HepG2 (cell line): ENCODE measurements at regions of chr2 and their contacts with region 1.

Region 1: DNA sequence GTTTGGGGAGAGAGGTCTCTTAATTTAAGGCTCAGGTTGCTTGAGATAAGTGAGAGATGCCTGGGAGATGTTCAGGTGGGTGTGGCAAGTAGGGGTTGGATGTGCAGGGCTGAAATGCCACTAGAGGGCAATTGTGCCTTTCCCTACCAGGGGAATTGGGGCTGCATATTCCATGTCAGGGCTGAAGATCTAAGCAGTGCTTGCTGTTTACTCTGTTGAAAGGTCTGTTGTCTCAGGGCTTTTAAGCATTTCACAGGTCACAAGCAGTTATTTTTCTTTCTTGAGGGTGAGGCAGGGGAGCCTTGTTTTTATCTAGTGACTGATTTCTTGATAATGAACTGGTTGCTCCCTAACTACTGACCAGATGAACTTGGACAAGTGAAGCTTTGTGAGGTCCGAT is 7.9 kb downstream of the CCDC85A start:
- DNase-seq: peak; percentile 39
- ATAC-seq: peak; percentile 99
- H3K4me3 ChIP-seq: no peak overlapping the region
- H3K27ac ChIP-seq: no peak overlapping the region
- H3K4me1 ChIP-seq: no peaks in the 10 kb centered on the region
- H3K27me3 ChIP-seq: peaks cover 0 to 14% of the 10 kb centered on the region in 2 experiments; a peak in 2 of 5 replicates
- CTCF ChIP-seq: peak; percentile 78
- EP300 ChIP-seq: no peak
- POLR2A ChIP-seq: no peak
- RAD21 ChIP-seq: peak; percentile 70

Region 2: DNA sequence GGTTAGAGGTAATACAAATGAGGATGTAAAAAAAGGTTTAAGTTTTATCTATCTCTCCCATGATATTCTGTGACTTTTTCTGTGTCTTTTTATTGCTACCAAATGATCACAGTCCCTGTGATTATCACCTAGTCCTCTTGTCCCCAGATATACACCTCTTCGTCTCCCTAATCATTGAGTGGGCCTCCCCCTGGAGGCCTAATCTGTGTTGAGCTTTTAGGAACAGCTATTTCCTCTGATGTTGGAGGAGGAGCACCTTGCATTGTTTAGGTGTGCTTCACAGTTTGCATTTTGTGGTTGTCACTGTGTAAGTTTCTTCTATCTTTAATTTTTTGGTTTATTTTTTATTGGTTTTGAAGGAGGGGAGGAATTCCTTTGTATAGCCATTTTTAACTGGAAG is 25.4 kb after region 1 on chr2:
- CTCF ChIA-PET with region 1: no interaction called
- POLR2A ChIA-PET with region 1: no interaction called
- in situ Hi-C with region 1: no loop called
- intact Hi-C with region 1: loop called (anchors 1 kb)
- DNase-seq: no peak
- ATAC-seq: no peak; the same call in 2 of the 3 replicates
- H3K4me3 ChIP-seq: no peak overlapping the region
- H3K27ac ChIP-seq: no peak overlapping the region
- H3K4me1 ChIP-seq: no peaks in the 10 kb centered on the region
- H3K27me3 ChIP-seq: no peaks in the 10 kb centered on the region
- CTCF ChIP-seq: peak; percentile 28; the same call in 1 of the 2 replicates
- EP300 ChIP-seq: no peak
- POLR2A ChIP-seq: no peak
- RAD21 ChIP-seq: no peak

Region 3: DNA sequence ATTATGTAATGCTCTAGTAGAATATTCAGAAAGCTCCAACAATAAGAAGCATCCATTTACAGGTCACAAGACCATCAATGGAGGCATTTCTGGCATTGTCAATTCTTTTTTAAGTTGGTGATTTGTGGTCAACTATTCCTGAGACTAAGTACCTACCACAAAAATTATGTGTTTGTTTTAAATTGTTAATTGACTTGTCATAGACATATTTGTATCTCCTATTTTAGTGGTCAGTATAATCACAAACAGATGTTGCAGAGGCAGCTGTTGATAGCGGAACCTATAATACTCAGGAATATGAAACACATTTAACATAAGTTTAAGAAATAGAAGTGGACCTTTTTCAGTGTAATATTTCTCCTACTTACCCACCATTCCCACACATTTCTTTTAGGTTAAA is 422.2 kb after region 1 on chr2:
- CTCF ChIA-PET with region 1: no interaction called
- POLR2A ChIA-PET with region 1: no interaction called
- in situ Hi-C with region 1: no loop called
- intact Hi-C with region 1: loop called (anchors 5 kb)
- DNase-seq: no peak
- ATAC-seq: no peak
- H3K4me3 ChIP-seq: no peak overlapping the region
- H3K27ac ChIP-seq: no peak overlapping the region
- H3K4me1 ChIP-seq: no peaks in the 10 kb centered on the region
- H3K27me3 ChIP-seq: no peaks in the 10 kb centered on the region
- CTCF ChIP-seq: no peak
- EP300 ChIP-seq: no peak
- POLR2A ChIP-seq: no peak
- RAD21 ChIP-seq: no peak

Region 4: GRCh38 chr2:56749152-56749752 is 557.6 kb after region 1 on chr2:
- CTCF ChIA-PET with region 1: interaction called, 3 read pairs
- POLR2A ChIA-PET with region 1: no interaction called
- in situ Hi-C with region 1: loop called (anchors 5 kb)
- intact Hi-C with region 1: loop called (anchors 1 kb)
- DNase-seq: peak; percentile 18
- ATAC-seq: peak; percentile 27; the same call in 1 of the 3 replicates
- H3K4me3 ChIP-seq: no peak overlapping the region
- H3K27ac ChIP-seq: no peak overlapping the region
- H3K4me1 ChIP-seq: no peaks in the 10 kb centered on the region
- H3K27me3 ChIP-seq: no peaks in the 10 kb centered on the region
- CTCF ChIP-seq: peak; percentile 46
- EP300 ChIP-seq: no peak
- POLR2A ChIP-seq: no peak
- RAD21 ChIP-seq: no peak